Left ventricle myocardium inferior (tissue), 1 donor: ENCODE measurements at regions of chr4 and their contacts with region 1.

Region 1: DNA sequence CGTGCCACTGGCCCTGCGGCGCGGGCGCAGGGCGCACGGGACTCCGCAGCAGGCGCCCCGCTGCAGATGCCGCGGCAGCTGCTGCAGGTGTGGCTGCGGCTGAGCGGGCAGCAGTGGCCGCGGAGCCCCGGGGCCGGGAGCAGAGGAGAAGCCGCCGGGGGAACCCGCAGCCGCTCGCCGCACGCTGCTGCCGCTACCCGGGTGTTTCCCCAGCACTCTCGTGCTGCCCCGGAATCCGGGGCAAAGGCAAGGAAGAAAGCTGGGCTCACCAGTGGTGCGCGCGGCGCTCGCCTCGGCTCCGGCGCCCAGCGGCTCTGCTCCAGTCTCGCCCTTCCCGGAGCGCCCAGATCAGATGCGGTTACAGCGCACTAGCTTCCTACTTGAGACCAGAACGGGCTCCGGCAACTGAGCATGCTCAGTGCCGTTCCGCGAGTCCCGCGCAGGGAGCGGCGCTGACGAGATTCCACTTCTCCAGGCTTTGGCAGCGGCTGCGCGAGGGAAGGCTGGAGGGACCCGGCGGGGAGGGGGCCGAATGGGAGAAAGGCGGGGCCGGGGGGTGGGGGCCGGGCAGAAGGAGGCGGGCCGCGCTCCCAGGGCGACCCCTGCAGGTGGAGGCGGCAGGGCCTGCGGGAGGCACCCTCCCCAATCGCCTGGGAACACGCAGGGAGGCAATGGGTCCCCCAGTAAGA is at the start of gene APBB2:
- DNase-seq: peak; percentile 94
- H3K4me3 ChIP-seq: peak within 1 kb of the TSS; percentile 99
- H3K27ac ChIP-seq: peak within 1 kb of the TSS; percentile 97
- H3K4me1 ChIP-seq: peaks cover 74% of the 10 kb centered on the region
- H3K27me3 ChIP-seq: no peaks in the 10 kb centered on the region
- CTCF ChIP-seq: peak; percentile 95
- total RNA-seq, gene APBB2: 23.5 TPM

Region 2: GRCh38 chr4:40056716-40057585 is 1157.3 kb before region 1 on chr4 and contains the start of gene N4BP2:
- intact Hi-C with region 1: no loop called
- DNase-seq: peak; percentile 86
- H3K4me3 ChIP-seq: peak within 1 kb of the TSS; percentile 96
- H3K27ac ChIP-seq: peak within 1 kb of the TSS; percentile 100
- H3K4me1 ChIP-seq: peaks cover 37% of the 10 kb centered on the region
- H3K27me3 ChIP-seq: no peaks in the 10 kb centered on the region
- CTCF ChIP-seq: peak; percentile 86
- total RNA-seq, gene N4BP2: 5.0 TPM

Region 3: GRCh38 chr4:40924096-40924792 is 290.0 kb before region 1 on chr4:
- intact Hi-C with region 1: loop called (anchors 10 kb)
- DNase-seq: peak; percentile 57
- H3K4me3 ChIP-seq: no peak overlapping the region
- H3K27ac ChIP-seq: no peak overlapping the region
- H3K4me1 ChIP-seq: peaks cover 7% of the 10 kb centered on the region
- H3K27me3 ChIP-seq: no peaks in the 10 kb centered on the region
- CTCF ChIP-seq: peak; percentile 88

Region 4: DNA sequence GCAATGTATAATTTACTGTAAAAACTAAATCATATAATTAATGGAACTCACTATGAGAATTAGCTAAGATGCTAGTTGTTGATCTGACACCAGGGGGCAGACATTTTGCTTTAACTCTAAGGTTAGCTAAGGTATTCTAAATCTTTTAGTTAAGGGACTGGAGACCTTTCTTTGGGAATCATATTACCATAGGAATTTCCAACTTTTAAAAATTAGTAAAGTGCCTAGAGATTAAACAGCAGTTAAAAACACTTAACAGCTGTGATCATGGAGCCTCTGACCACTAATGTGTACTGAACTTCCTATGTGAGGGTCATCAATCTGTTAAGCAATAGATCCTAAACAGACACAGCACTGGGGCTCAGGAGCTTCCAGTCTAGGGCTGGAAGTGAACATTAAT is 237.9 kb before region 1 on chr4:
- intact Hi-C with region 1: loop called (anchors 2 kb)
- DNase-seq: no peak
- H3K4me3 ChIP-seq: no peak overlapping the region
- H3K27ac ChIP-seq: no peak overlapping the region
- H3K4me1 ChIP-seq: peaks cover 10% of the 10 kb centered on the region
- H3K27me3 ChIP-seq: no peaks in the 10 kb centered on the region
- CTCF ChIP-seq: peak; percentile 84